A549 (cell line): ENCODE measurements at regions of chr16 and their contacts with region 1.

Region 1: GRCh38 chr16:28873536-28874201 is 4.6 kb upstream of the ATP2A1 start:
- DNase-seq: peak in 1 of 2 experiments; percentile 73
- ATAC-seq: peak in 1 of 2 experiments; percentile 70; a peak in 3 of 6 replicates
- H3K4me3 ChIP-seq: no peak overlapping the region
- H3K27ac ChIP-seq: no peak overlapping the region
- H3K4me1 ChIP-seq: peaks cover 13% of the 10 kb centered on the region; the same call in 2 of the 3 replicates
- CTCF ChIP-seq: peak; percentile 50
- EP300 ChIP-seq: no peak
- POLR2A ChIP-seq: no peak
- RAD21 ChIP-seq: peak; percentile 14 to 25; a peak in 2 of 5 replicates

Region 2: GRCh38 chr16:28910086-28911031 is 36.7 kb after region 1 on chr16:
- CTCF ChIA-PET with region 1: interaction called, 17 read pairs
- POLR2A ChIA-PET with region 1: no interaction called
- DNase-seq: peak in 1 of 2 experiments; percentile 55
- ATAC-seq: peak; percentile 17 to 48; a peak in 3 of 6 replicates
- H3K4me3 ChIP-seq: no peak overlapping the region
- H3K27ac ChIP-seq: peak overlapping the region in 1 of 2 experiments; percentile 70; a peak in 3 of 6 replicates
- H3K4me1 ChIP-seq: peaks cover 9% of the 10 kb centered on the region; the same call in 1 of the 3 replicates
- CTCF ChIP-seq: no peak
- EP300 ChIP-seq: no peak
- POLR2A ChIP-seq: no peak
- RAD21 ChIP-seq: no peak

Region 3: DNA sequence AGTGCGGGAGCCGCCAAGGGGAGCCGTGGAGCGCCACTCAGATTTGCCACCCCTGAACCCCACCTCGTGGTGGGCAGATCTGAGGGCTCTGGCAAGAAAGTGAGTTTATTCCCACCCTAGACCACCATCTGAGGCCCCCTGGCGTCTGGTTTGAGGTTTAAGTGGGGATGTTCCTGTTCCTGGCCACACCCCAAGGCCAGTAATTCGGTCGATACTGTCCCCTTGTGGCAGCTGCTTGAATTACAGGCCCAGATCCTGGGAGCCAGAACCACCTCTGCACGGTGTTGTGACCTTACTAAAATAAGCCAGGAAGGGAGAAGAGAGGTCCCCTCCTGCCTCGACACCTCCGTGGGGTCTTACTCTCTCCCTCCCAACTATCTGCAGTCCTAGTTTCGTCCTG is 107.8 kb after region 1 on chr16:
- CTCF ChIA-PET with region 1: no interaction called
- POLR2A ChIA-PET with region 1: no interaction called
- DNase-seq: peak; percentile 30 to 61
- ATAC-seq: peak; percentile 12 to 66; a peak in 3 of 6 replicates
- H3K4me3 ChIP-seq: no peak overlapping the region
- H3K27ac ChIP-seq: no peak overlapping the region
- H3K4me1 ChIP-seq: peaks cover 15% of the 10 kb centered on the region; the same call in 2 of the 3 replicates
- CTCF ChIP-seq: peak; percentile 37
- EP300 ChIP-seq: no peak
- POLR2A ChIP-seq: no peak
- RAD21 ChIP-seq: peak in 1 of 2 experiments; percentile 45; a peak in 2 of 5 replicates